ENCODE measurements at regions of chr18 and their contacts with region 1.

Region 1: DNA sequence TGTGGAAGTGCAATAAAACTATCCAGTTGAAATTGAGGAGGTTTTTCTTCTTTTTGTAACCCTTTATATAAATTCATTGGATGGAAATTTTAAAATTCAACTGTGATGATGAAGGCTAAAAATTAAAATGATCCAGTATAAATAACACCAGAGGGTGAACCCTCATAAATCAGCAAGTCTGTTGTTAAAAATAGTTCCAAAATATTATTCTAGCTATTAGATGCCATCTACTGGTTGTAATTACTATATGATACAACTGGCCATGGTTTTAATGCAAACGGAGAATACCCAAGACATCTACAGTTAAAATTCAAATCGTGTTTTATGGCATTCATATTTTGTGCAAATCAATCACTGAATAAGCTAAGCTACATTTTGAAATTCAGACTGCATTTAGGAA is 53.8 kb downstream of the TMEM200C start:
- DNase-seq: no peak
- H3K4me3 ChIP-seq: no peak overlapping the region
- H3K4me3 Mint-ChIP-seq: no peak overlapping the region
- H3K27ac Mint-ChIP-seq: no peak overlapping the region
- H3K4me1 ChIP-seq: no peaks in the 10 kb centered on the region
- H3K4me1 Mint-ChIP-seq: no peaks in the 10 kb centered on the region
- H3K27me3 ChIP-seq: no peaks in the 10 kb centered on the region
- H3K27me3 Mint-ChIP-seq: no peaks in the 10 kb centered on the region
- CTCF ChIP-seq: no peak

Region 2: DNA sequence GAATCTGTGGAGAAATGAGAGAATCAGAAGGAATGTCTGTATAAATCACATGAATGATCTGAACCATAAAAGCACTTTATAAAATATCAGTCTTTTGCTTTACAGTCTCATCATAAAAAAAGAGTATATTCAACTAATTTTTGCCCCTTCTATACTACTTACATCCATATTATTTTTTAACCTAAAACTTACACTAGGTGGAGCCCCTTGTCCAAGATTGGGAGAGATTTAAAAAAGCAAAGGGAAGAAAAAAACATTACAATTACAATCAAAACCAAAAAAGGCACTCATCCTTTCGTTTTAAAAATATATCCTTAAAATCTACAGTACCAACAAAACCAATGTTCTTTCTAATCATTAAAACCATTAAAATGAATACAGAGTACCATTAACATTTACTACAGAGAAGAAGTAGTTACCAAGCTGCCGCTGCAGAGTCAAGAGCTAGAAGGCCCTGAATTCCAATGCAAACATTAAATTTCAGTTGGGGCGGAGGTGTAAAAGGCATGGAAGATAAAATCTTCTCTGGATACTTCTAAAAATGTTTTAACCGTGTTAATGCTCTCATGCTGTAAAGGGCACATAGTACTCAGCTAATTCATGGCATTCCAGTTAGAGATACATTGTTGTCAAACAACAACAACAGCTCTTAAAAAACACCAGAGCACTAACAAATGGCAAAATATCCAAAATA is 241.0 kb before region 1 on chr18:
- CTCF ChIA-PET with region 1: no interaction called
- POLR2A ChIA-PET with region 1: no interaction called
- intact Hi-C with region 1: loop called (anchors 1 kb)
- DNase-seq: peak in 1 of 2 experiments; percentile 26
- H3K4me3 ChIP-seq: no peak overlapping the region
- H3K4me3 Mint-ChIP-seq: no peak overlapping the region
- H3K27ac Mint-ChIP-seq: no peak overlapping the region
- H3K4me1 ChIP-seq: peaks cover 11% of the 10 kb centered on the region; the same call in 1 of the 2 replicates
- H3K4me1 Mint-ChIP-seq: no peaks in the 10 kb centered on the region
- H3K27me3 ChIP-seq: no peaks in the 10 kb centered on the region
- H3K27me3 Mint-ChIP-seq: peaks cover 12% of the 10 kb centered on the region
- CTCF ChIP-seq: peak; percentile 33 to 34

Region 3: DNA sequence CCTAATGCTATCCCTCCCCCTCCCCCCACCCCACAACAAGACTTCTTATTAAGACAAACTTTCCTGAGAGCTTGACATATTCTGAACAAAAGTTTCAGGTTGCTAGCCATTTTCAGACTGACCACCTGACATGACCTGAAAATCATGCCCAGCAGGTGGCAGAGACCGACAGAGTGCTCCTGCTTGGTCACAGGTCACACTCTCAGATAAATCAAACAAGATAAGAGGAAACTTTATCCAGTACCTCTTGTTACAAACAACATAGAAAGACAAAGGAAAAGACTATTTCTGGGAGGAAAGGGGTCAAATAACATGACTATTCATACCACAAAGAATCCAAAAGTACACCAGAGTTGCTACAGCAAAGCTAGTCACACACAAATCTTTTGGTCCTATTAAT is 53.6 kb before region 1 on chr18:
- CTCF ChIA-PET with region 1: no interaction called
- POLR2A ChIA-PET with region 1: no interaction called
- intact Hi-C with region 1: loop called (anchors 5 kb)
- DNase-seq: peak in 1 of 2 experiments; percentile 15
- H3K4me3 ChIP-seq: no peak overlapping the region
- H3K4me3 Mint-ChIP-seq: no peak overlapping the region
- H3K27ac Mint-ChIP-seq: no peak overlapping the region
- H3K4me1 ChIP-seq: no peaks in the 10 kb centered on the region
- H3K4me1 Mint-ChIP-seq: no peaks in the 10 kb centered on the region
- H3K27me3 ChIP-seq: no peaks in the 10 kb centered on the region
- H3K27me3 Mint-ChIP-seq: no peaks in the 10 kb centered on the region
- CTCF ChIP-seq: peak in 1 of 2 experiments; percentile 35

Region 4: DNA sequence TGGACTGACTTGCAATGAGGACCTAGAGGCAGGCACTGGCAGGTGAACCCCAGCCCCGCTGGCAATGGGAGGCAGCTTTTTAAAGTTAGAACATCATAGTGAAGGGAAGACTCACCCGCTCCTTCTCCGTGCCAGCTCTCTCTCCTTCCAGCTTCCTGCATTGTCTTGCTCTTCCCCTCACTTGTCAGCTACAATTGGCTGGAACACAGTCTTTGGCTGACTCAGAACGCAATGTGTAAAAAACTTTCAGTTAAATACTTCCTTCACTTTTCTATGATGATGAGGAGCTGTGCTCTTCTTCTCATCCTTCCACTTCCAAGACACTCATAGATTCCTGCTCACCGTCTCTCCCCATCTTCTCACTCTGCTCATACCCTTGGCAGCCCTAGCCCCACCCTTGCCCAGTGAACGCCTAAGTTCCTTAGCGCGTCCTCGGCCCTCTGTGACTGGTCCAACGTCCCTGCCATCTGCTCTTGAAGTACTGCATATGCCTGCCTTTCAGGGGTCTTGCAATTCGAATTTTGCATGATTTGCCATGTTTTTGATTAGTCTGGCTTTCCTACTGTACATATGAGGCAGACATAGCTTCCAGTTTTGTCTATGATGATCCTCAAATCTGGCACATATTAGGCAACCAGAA is 171.8 kb after region 1 on chr18:
- CTCF ChIA-PET with region 1: no interaction called
- POLR2A ChIA-PET with region 1: no interaction called
- intact Hi-C with region 1: no loop called
- DNase-seq: no peak
- H3K4me3 ChIP-seq: no peak overlapping the region
- H3K4me3 Mint-ChIP-seq: no peak overlapping the region
- H3K27ac Mint-ChIP-seq: no peak overlapping the region
- H3K4me1 ChIP-seq: no peaks in the 10 kb centered on the region
- H3K4me1 Mint-ChIP-seq: no peaks in the 10 kb centered on the region
- H3K27me3 ChIP-seq: no peaks in the 10 kb centered on the region
- H3K27me3 Mint-ChIP-seq: peaks cover 3% of the 10 kb centered on the region
- CTCF ChIP-seq: no peak

Measured in Caco-2 (cell line).